Naive thymus-derived CD8-positive, alpha-beta T cell (primary cell): ENCODE measurements at regions of chr7 and their contacts with region 1.

Region 1: GRCh38 chr7:149071641-149072437 is 18.7 kb downstream of the ZNF786 start:
- DNase-seq: peak in 9 of 10 donors; percentile 28 to 68 (median 45)
- ATAC-seq: peak; percentile 68 to 89
- H3K4me3 Mint-ChIP-seq: peak overlapping the region in 5 of 10 donors; percentile 28 to 54 (median 37)
- H3K27ac Mint-ChIP-seq: peak overlapping the region in 9 of 10 donors; percentile 47 to 92 (median 76)
- H3K4me1 Mint-ChIP-seq: peaks cover 3 to 27% (median 7%) of the 10 kb centered on the region in 4 donors
- H3K27me3 Mint-ChIP-seq: no peaks in the 10 kb centered on the region

Region 2: DNA sequence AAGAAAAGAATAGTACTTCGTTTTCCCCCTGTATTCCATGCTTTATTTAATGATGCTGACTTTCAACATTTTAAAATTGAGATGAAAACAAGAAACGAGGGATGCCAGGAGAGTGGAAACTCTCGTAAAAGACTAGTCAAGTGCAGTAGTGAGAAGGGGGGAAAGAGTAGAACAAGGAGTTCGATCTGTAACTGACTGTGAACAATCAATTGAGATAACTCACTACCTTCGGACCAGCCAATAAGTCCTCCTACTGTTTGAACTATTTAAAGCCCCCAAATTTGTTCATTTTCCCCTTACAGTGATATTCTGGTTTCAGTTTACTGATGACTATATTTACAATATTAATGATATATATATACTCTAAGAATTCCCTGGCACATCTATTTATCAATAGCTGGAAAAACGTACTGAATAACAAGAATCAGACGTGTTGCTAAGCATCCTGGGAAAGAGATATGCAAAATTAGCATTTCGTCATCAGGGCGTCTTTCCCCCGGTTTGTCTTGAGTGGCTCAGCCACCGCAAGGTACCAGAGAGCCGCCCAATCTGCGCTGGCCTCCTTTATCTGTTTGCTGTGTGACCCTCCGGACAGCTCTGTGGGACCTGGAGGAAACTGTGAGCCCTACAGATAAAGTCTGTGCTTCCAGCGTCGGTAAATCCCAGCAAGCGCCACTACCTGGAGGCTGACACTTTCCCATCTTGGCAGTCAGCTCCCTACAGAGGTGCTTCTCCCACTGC is 84.7 kb before region 1 on chr7:
- POLR2A ChIA-PET with region 1: no interaction called
- DNase-seq: peak; percentile 53 to 98 (median 82)
- ATAC-seq: peak; percentile 74 to 80
- H3K4me3 Mint-ChIP-seq: peak overlapping the region; percentile 95 to 98 (median 96)
- H3K27ac Mint-ChIP-seq: peak overlapping the region; percentile 90 to 98 (median 96)
- H3K4me1 Mint-ChIP-seq: peaks cover 30 to 57% (median 53%) of the 10 kb centered on the region in 4 donors
- H3K27me3 Mint-ChIP-seq: peaks cover 0 to 5% (median 0%) of the 10 kb centered on the region in 5 donors

Region 3: GRCh38 chr7:149005241-149006050 is 66.4 kb before region 1 on chr7:
- POLR2A ChIA-PET with region 1: interaction called, 12 read pairs
- DNase-seq: peak; percentile 68 to 92 (median 79)
- ATAC-seq: peak; percentile 97 to 98
- H3K4me3 Mint-ChIP-seq: no peak overlapping the region
- H3K27ac Mint-ChIP-seq: peak overlapping the region in 9 of 10 donors; percentile 7 to 88 (median 72)
- H3K4me1 Mint-ChIP-seq: peaks cover 4 to 12% (median 9%) of the 10 kb centered on the region in 4 donors
- H3K27me3 Mint-ChIP-seq: no peaks in the 10 kb centered on the region

Region 4: DNA sequence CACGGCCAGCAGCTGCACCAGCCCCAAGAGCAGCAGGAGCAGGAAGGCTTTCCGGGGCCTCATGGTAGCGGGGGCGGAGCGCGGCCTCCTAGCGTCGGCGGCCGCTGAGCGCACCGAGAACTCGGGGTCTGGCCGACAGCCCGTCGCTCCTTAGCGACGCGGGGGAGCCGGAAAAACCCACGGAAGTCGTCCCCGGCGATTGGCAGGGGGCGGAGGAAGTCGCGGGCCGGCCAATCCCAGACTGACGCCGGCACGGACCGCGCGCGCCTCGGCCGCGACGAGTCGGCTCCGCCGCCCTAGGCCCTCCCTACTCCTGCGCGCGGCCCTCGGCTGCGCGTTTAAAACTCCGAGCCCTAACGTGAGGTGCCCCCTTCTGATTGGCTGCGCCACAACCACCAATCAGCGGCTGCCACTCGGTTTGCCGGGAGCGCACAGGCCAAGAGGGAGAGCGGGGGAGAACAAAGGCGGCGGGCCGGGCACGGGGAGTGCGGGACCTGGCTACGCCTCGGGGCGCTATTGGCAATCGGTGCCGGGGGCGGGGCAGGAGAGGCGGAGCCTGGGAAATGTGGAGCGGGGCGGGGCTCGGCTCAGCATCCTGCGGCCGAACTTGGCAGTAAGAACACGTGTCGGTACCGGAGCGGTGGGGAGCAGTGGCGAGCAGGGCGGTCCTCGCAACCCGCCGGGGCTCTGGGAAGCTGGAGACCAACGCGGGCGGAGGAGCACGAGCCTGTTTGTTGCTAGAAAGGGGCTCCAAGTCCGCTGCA is 43.3 kb before region 1 on chr7 and contains the start of gene PDIA4:
- POLR2A ChIA-PET with region 1: interaction called, 23 read pairs
- DNase-seq: peak; percentile 98 to 99 (median 99)
- ATAC-seq: peak; percentile 88 to 89
- H3K4me3 Mint-ChIP-seq: peak within 1 kb of the TSS; percentile 90 to 96 (median 92)
- H3K27ac Mint-ChIP-seq: peak within 1 kb of the TSS; percentile 87 to 97 (median 95)
- H3K4me1 Mint-ChIP-seq: peaks cover 26 to 50% (median 45%) of the 10 kb centered on the region in 4 donors
- H3K27me3 Mint-ChIP-seq: no peaks in the 10 kb centered on the region
- polyA plus RNA-seq, gene PDIA4: 80.3 to 94.0 (median 89.5) TPM